ENCODE measurements at regions of chr1 and their contacts with region 1.

Region 1: GRCh38 chr1:236281654-236282424 is at the start of gene ERO1B:
- DNase-seq: peak; percentile 98
- H3K4me3 Mint-ChIP-seq: peak within 1 kb of the TSS; percentile 90
- H3K27ac Mint-ChIP-seq: peak within 1 kb of the TSS; percentile 80
- H3K4me1 Mint-ChIP-seq: peaks cover 45% of the 10 kb centered on the region
- H3K27me3 Mint-ChIP-seq: peaks cover 12% of the 10 kb centered on the region
- total RNA-seq, gene ERO1B: 2.1 and 2.4 TPM in 2 replicates

Region 2: GRCh38 chr1:236103646-236104218 is 178.1 kb before region 1 on chr1:
- intact Hi-C with region 1: loop called (anchors 2 kb)
- DNase-seq: peak; percentile 38
- H3K4me3 Mint-ChIP-seq: no peak overlapping the region
- H3K27ac Mint-ChIP-seq: no peak overlapping the region
- H3K4me1 Mint-ChIP-seq: peaks cover 6% of the 10 kb centered on the region
- H3K27me3 Mint-ChIP-seq: peaks cover 3% of the 10 kb centered on the region

Region 3: GRCh38 chr1:236142253-236143103 is 139.4 kb before region 1 on chr1 and contains the start of gene GPR137B:
- intact Hi-C with region 1: loop called (anchors 1 kb)
- DNase-seq: peak; percentile 39
- H3K4me3 Mint-ChIP-seq: peak within 1 kb of the TSS; percentile 91
- H3K27ac Mint-ChIP-seq: peak within 1 kb of the TSS; percentile 93
- H3K4me1 Mint-ChIP-seq: peaks cover 25% of the 10 kb centered on the region
- H3K27me3 Mint-ChIP-seq: peaks cover 42% of the 10 kb centered on the region
- total RNA-seq, gene GPR137B: 9.2 and 10.5 TPM in 2 replicates

Region 4: GRCh38 chr1:236523701-236524141 is 241.9 kb after region 1 on chr1 and contains the start of gene LGALS8:
- intact Hi-C with region 1: loop called (anchors 2 kb)
- DNase-seq: peak; percentile 78
- H3K4me3 Mint-ChIP-seq: peak within 1 kb of the TSS; percentile 99
- H3K27ac Mint-ChIP-seq: peak within 1 kb of the TSS; percentile 100
- H3K4me1 Mint-ChIP-seq: peaks cover 36% of the 10 kb centered on the region
- H3K27me3 Mint-ChIP-seq: no peaks in the 10 kb centered on the region
- total RNA-seq, gene LGALS8: 56.6 and 66.2 TPM in 2 replicates